ENCODE measurements at regions of chr19 and their contacts with region 1.

Region 1: GRCh38 chr19:2070436-2070827 is 19.4 kb upstream of the MKNK2 start:
- DNase-seq: no peak
- H3K4me3 ChIP-seq: no peak overlapping the region
- H3K27ac ChIP-seq: peak overlapping the region in 1 of 4 donors; percentile 43
- H3K4me1 ChIP-seq: peaks cover 0 to 24% (median 0%) of the 10 kb centered on the region in 3 donors
- H3K27me3 ChIP-seq: no peaks in the 10 kb centered on the region
- CTCF ChIP-seq: no peak
- POLR2A ChIP-seq: no peak

Region 2: GRCh38 chr19:1910169-1910568 is 160.3 kb before region 1 on chr19:
- intact Hi-C with region 1: loop called (anchors 10 kb)
- DNase-seq: no peak
- H3K4me3 ChIP-seq: no peak overlapping the region
- H3K27ac ChIP-seq: peak overlapping the region in 1 of 4 donors; percentile 97
- H3K4me1 ChIP-seq: peaks cover 53 to 96% (median 53%) of the 10 kb centered on the region in 3 donors
- H3K27me3 ChIP-seq: no peaks in the 10 kb centered on the region
- CTCF ChIP-seq: no peak
- POLR2A ChIP-seq: no peak

Region 3: DNA sequence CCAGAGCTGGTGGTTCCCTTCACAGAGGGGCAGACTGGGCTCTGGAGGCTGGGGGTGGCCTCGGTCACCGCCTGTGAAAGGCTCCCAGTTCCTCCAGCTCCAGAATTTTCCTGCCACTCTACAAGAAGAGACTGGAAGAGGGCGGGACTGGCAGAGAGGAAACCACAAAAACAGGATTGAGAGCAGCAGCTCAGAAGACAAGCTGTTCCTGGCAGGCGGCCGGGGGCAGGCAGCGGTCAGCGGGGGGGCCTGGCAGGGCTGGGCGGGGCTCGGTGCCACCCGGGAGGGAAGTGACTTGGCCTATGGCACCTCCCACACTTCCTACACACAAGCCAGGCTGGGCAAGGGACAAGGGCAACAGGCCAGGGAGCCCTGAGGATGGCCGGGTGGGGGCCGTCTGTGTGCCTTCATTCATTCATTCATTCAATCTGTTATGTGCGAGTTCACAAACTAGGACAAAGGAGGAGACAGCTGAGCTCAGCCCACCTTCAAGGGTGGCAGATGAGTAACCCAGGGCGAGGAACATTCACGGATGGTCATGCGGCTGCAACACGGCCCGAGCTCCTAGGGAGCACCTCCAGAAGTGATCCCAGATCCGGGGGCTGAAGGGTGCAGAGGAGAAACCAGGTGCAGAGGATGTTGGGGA is 38.0 kb before region 1 on chr19:
- intact Hi-C with region 1: no loop called
- DNase-seq: peak; percentile 55
- H3K4me3 ChIP-seq: peak overlapping the region in 3 of 4 donors; percentile 11 to 58 (median 23)
- H3K27ac ChIP-seq: peak overlapping the region; percentile 94 to 99 (median 98)
- H3K4me1 ChIP-seq: peaks cover 43 to 75% (median 60%) of the 10 kb centered on the region in 3 donors
- H3K27me3 ChIP-seq: no peaks in the 10 kb centered on the region
- CTCF ChIP-seq: no peak
- POLR2A ChIP-seq: peak in 2 of 4 donors; percentile 9 to 49

Region 4: GRCh38 chr19:2135474-2136402 is 65.3 kb after region 1 on chr19:
- intact Hi-C with region 1: no loop called
- DNase-seq: no peak
- H3K4me3 ChIP-seq: no peak overlapping the region
- H3K27ac ChIP-seq: no peak overlapping the region
- H3K4me1 ChIP-seq: no peaks in the 10 kb centered on the region
- H3K27me3 ChIP-seq: no peaks in the 10 kb centered on the region
- CTCF ChIP-seq: no peak
- POLR2A ChIP-seq: no peak

Measured in esophagus squamous epithelium (tissue), 5 donors.